Activated T-helper 1 cell treated with anti-CD3 and anti-CD28 coated beads, Interleukin-12 subunit alpha, Interleukin-12 subunit beta, Interleukin-2, Interleukin-4 antibody, amounts not matched to agents 30 ng/mL and 10 ng/mL and 1 ng/mL, durations not matched to agents 14 hours and 24 hours and 36 hours (primary cell): ENCODE measurements at regions of chr6 and their contacts with region 1.

Region 1: DNA sequence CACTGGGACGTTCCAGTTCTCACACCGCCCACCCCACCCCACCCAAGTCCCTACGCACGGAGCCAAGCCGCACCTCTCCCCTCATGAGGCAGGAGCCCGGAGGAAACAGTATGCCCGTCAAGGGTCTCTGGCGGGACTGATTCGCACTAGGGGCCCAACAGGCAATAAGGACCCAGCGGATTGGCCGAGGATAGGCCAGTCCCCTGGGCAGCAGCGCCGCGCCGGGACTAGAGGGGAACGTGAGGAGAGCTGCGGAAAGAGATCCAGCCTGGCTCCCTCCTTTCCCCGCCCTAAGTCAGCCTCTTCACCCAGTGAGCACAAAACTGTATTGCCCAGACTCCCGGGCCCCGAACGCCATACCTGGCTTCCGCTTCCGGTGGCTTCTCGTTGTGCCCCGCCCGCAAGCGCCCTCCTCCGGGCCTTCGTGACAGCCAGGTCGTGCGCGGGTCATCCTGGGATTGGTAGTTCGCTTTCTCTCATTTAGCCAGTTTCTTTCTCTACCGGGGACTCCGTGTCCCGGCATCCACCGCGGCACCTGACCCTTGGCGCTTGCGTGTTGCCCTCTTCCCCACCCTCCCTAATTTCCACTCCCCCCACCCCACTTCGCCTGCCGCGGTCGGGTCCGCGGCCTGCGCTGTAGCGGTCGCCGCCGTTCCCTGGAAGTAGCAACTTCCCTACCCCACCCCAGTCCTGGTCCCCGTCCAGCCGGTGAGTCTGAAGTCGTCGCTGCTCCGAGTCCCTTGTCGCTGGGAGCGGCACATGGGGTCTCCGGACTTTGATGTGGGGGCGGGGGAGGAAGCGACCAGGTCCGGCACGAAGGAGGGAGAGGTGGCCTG is at the start of gene CSNK2B:
- DNase-seq: peak; percentile 98
- H3K4me3 Mint-ChIP-seq: peak within 1 kb of the TSS; percentile 98
- H3K27ac Mint-ChIP-seq: peak within 1 kb of the TSS; percentile 90
- H3K4me1 Mint-ChIP-seq: peaks cover 74% of the 10 kb centered on the region
- H3K27me3 Mint-ChIP-seq: no peaks in the 10 kb centered on the region
- total RNA-seq, gene CSNK2B: 302 and 308 TPM in 2 replicates

Region 2: DNA sequence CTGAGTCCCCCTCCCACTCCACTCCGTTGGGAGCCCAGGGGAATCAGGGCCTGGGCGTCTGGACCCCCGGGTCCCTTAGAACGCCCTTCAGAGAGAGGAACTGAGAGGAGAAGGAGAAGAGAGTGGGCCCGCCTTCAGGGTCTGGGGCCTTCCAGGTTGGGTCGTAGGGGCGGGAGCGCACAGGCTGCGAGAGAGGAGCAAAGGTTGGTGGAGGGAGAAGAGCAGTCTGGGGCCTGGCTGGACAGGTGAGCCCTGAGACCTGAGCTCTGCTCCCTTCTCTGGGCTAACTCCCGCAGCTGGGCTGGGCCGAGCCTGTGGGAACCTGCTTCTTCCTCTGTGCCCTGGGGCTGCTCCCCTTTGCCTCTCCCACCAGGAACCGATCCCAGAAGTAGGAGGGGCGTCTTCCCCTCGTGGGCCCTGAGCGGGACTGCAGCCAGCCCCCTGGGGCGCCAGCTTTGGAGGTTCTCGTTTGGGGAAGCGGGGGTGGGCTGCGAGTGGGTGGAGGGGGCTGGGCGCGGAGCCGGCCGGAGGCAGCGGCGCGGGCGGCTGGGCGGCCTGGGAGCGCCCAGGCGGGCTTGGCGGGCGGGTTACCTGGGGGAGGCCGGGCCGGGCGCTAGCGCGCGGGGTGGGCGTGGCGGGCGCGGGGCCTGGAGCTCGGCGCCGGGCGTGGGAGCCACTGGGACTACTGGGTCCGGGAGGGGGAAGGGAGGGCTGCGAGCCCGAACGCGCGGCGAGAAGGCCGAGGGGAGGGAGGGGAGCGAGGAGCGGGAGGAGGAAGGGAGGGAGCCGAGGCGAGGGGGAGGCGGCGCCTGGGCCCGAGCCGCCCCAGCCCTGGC is 781.8 kb before region 1 on chr6 and contains the start of gene DDR1:
- intact Hi-C with region 1: no loop called
- DNase-seq: no peak
- H3K4me3 Mint-ChIP-seq: peak within 1 kb of the TSS; percentile 77
- H3K27ac Mint-ChIP-seq: peak within 1 kb of the TSS; percentile 65
- H3K4me1 Mint-ChIP-seq: peaks cover 45% of the 10 kb centered on the region
- H3K27me3 Mint-ChIP-seq: peaks cover 3% of the 10 kb centered on the region
- total RNA-seq, gene DDR1: 21.4 and 24.8 TPM in 2 replicates

Region 3: DNA sequence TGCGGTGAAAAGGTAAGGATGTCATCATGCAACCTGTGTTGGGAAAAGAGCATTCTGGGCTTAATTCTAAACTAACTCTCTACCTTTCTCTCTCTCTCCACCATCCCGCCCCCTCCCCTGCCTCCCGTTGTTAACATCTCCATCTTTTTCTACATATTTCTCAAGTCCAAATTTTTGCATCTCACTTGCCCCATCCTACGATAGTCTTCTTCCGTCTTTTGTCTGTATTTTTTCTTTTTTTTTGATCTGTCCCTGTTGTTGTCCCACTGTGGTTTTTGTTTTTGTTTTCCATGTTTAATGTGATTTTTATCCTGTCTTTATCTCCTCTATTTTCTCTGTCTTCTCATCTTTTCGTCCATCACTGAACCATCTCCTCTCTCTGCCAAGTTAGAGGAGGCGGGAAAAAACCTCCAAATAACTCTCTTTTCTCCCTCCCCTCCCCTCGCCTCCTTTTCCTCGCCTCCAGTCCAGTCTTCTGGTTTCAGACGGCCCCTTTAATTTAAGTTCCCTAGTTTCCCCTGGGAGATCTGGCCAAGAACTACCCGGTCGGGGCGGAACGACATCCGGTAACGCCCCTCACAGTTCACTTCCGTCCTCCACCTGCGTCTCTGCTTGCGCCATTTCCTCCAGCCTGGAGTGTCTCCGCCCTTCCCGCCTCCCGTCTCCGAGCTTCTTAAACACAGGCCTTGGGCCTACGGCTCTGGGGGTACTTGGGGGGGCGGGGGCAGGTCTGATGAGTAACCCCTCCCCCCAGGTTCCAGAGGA is 118.6 kb before region 1 on chr6 and contains the start of gene NFKBIL1:
- intact Hi-C with region 1: loop called (anchors 1 kb)
- DNase-seq: peak; percentile 88
- H3K4me3 Mint-ChIP-seq: peak within 1 kb of the TSS; percentile 87
- H3K27ac Mint-ChIP-seq: peak within 1 kb of the TSS; percentile 82
- H3K4me1 Mint-ChIP-seq: peaks cover 36% of the 10 kb centered on the region
- H3K27me3 Mint-ChIP-seq: peaks cover 3% of the 10 kb centered on the region
- total RNA-seq, gene NFKBIL1: 18.2 and 18.9 TPM in 2 replicates

Region 4: DNA sequence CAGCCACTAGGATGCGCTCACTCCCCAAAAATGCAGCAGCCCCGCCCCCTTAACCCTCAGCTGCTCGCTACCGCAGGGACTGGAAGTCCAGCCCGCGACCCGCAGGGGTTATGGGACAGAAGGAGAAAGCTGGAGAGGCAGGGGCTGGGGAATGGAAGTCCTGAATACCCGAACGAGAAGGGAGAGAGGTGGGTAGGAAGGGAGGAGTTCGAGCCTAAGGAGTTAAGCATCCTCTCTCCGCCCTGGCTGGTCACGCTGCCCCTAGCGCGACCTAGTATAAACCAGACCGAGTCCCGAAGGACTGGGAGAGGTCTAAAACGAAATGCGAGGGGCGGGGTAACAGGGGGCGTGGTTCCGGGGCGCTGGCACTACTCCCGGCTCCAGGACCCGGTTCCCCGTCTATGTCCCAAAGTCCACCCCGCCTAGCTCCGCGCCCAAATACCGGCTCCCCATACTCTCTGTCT is 63.8 kb after region 1 on chr6:
- intact Hi-C with region 1: loop called (anchors 1 kb)
- DNase-seq: peak; percentile 68
- H3K4me3 Mint-ChIP-seq: peak overlapping the region; percentile 95
- H3K27ac Mint-ChIP-seq: peak overlapping the region; percentile 74
- H3K4me1 Mint-ChIP-seq: peaks cover 54% of the 10 kb centered on the region
- H3K27me3 Mint-ChIP-seq: no peaks in the 10 kb centered on the region

Region 5: GRCh38 chr6:31827286-31828079 is 161.8 kb after region 1 on chr6 and contains the start of gene HSPA1B:
- intact Hi-C with region 1: loop called (anchors 1 kb)
- DNase-seq: peak; percentile 95
- H3K4me3 Mint-ChIP-seq: peak within 1 kb of the TSS; percentile 83
- H3K27ac Mint-ChIP-seq: peak within 1 kb of the TSS; percentile 93
- H3K4me1 Mint-ChIP-seq: peaks cover 41% of the 10 kb centered on the region
- H3K27me3 Mint-ChIP-seq: no peaks in the 10 kb centered on the region
- total RNA-seq, gene HSPA1B: 152 and 155 TPM in 2 replicates

Region 6: DNA sequence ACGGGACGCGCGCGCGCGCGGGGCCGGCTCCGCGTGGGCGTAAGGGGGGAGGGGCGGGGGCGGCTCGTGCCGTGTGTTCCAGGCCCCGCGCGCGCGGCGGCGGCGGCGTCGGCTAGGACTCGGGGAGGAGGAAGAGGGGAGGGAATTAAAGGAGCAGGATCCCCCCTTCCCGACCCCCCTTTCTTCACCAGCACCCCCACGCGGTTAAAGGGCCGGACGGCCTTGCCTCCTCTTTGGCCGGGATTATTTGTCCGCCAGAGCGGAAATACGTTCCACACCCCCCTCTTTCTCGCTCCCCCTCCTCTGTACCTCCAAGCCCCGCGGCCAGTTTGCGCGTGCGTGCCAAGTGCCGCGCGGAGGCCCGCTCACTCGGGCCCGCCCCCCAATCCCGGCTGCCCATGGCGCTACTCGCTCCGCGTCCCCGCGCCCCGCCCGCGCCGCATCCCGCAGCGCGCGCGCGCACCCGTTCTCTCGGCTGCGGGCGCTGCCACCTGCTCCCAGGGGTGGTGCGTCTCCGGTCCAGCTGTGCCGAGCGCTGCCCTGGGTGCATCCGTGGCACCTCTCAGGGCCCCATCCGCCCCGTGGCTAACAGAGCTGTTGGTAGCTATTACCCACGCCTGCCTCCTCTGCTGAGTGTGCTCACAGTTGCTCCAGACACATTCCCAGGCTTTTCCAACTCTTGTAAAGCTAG is 236.4 kb after region 1 on chr6 and contains the start of gene ZBTB12:
- intact Hi-C with region 1: loop called (anchors 1 kb)
- DNase-seq: peak; percentile 82
- H3K4me3 Mint-ChIP-seq: peak within 1 kb of the TSS; percentile 81
- H3K27ac Mint-ChIP-seq: peak within 1 kb of the TSS; percentile 88
- H3K4me1 Mint-ChIP-seq: peaks cover 37% of the 10 kb centered on the region
- H3K27me3 Mint-ChIP-seq: no peaks in the 10 kb centered on the region
- total RNA-seq, gene ZBTB12: 4.6 and 5.1 TPM in 2 replicates

Region 7: DNA sequence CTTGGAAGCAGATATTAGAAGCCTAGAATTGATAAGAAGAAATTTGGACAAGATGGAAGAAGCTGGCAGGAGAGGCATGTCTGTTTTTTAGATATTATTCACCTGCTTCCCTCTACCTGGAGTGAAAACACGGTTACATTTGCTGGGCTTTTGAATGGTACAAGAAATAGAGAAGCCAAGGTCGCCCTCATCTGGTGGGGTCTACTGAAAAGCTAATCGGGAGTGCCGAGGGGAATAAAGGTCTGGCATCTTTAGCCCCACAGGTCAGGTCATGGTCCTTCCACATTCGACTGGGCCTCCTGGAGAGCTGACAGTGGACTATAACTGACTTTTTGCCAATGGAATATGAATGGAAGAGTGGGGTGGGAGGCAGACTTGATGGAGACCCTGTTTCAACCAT is 257.2 kb after region 1 on chr6:
- intact Hi-C with region 1: no loop called
- DNase-seq: no peak
- H3K4me3 Mint-ChIP-seq: no peak overlapping the region
- H3K27ac Mint-ChIP-seq: no peak overlapping the region
- H3K4me1 Mint-ChIP-seq: no peaks in the 10 kb centered on the region
- H3K27me3 Mint-ChIP-seq: peaks cover 7% of the 10 kb centered on the region

Region 8: DNA sequence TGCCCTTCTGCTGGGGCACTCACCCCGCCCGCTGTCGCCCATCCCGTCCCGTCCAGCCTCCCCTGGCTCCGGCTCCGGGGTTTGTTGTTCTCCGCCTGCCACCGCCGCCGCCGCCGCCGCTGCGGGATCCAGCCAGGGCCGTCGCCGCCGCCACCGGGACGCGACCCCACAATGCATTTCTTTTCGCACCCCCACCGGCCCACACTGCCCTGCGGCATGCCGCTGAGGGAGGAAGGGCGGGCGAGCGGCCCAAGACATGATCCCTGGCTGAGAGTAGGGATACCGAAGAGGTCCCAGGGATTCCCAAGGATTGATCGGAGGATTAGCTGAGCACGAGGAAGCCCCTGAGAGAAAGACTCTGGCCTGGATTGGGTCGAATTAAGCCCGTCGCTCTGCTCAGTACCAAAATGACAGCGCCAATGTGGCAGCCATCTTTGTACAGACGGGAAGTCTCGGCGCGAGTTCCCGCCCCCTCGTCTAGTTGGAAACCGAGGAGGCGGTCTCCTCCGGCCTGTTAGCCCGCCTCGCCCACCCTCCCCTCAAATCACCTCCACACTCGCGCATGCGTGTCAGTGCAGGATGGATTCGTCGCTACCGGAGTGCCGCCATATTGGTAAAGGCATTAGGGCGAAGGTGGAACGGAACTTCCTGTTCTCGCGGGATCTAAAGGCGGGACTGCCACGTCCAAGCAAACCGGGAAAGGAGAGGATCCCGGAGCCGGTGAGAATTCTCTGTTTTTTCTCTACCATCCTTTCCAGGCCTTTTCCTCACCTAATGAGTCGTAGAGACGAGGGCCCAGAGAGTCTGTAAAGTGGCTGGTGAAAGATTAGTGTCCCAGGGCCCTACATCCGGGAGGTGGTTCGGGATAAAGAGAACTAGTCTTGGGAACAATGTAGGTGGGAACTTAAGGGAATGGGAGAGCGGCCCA is 1534.8 kb after region 1 on chr6 and contains the starts of genes RXRB and SLC39A7:
- intact Hi-C with region 1: loop called (anchors 10 kb)
- DNase-seq: peak; percentile 97
- H3K4me3 Mint-ChIP-seq: peak within 1 kb of the TSS; percentile 100
- H3K27ac Mint-ChIP-seq: peak within 1 kb of the TSS; percentile 97
- H3K4me1 Mint-ChIP-seq: peaks cover 75% of the 10 kb centered on the region
- H3K27me3 Mint-ChIP-seq: no peaks in the 10 kb centered on the region
- total RNA-seq, gene RXRB: 46.6 and 47.4 TPM in 2 replicates
- total RNA-seq, gene SLC39A7: 67.1 and 68.8 TPM in 2 replicates